ENCODE measurements at regions of chr9 and their contacts with region 1.

Region 1: DNA sequence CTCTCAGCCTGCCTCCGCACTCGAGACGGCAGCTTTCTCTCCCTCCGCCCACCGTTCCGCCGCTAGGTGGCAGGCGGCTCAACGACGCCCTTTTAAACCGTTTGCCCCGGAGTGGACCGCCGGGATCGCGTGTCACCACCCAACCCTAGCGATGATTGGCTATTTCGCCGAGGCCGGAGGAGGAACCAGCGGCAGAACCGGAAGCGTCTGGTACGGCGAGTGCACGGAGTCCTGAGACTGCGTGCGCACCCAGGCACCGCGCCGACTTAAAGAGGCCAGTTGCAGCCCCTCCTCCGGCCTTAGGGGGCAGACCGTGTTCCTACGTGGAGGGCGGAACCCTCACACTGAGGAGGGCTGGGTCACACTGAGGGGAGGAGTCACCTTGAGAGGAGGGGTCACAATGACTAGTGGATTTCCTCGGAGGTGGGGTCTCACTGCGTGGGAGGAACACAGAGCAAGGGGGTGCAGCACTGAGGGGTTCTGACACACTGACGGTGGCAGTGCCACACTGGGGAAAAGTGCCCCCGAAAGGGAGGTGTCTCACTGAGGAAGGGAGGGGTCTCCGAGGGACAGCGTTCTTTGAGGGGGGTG is 980 bp upstream of the TESK1 start:
- DNase-seq: peak; percentile 95
- ATAC-seq: peak; percentile 90
- H3K4me3 Mint-ChIP-seq: peak overlapping the region; percentile 97
- H3K27ac Mint-ChIP-seq: peak overlapping the region; percentile 97
- H3K4me1 Mint-ChIP-seq: peaks cover 37% of the 10 kb centered on the region
- H3K27me3 Mint-ChIP-seq: no peaks in the 10 kb centered on the region
- CTCF ChIP-seq: peak; percentile 76

Region 2: DNA sequence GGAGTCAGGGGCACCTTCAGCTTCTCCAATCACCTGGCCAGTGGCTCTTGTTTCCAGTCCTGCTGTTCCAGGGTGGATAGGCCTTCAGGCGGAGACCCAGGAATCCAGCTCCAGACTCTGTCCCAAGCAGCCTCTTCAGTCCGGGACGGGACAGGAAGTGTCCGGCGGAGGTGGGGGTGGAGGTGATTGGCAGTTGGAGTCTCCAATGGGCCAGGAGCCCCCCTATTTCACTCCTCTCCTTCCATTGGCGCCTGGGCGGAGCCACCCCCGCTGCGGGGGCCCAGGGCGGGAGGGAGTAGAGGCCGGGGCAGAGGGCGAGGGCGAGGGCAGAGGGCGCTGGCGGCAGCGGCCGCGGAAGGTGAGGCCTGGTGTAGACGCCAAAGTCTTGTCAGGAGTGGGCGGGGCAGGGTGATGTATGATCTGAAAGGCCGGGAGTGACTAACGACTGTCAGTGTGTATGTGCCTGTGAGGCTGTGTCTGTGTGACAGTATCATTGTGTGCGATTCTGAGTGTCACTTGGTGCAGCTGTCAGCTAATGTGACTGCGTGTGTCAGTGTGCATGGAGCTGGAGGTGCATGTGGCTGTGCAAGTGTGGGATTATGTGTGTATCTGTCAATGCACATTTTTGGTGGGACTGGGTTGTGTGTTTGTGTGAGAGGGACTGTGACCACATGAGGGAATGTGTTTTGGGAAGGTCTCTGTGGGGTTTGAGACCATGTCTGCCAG is 952.0 kb before region 1 on chr9 and contains the start of gene IL11RA:
- CTCF ChIA-PET with region 1: no interaction called
- POLR2A ChIA-PET with region 1: no interaction called
- intact Hi-C with region 1: no loop called
- DNase-seq: no peak
- ATAC-seq: peak; percentile 42
- H3K4me3 Mint-ChIP-seq: no peak within 1 kb of the TSS
- H3K27ac Mint-ChIP-seq: no peak within 1 kb of the TSS
- H3K4me1 Mint-ChIP-seq: peaks cover 24% of the 10 kb centered on the region
- H3K27me3 Mint-ChIP-seq: no peaks in the 10 kb centered on the region
- CTCF ChIP-seq: no peak
- total RNA-seq, gene IL11RA: 11.2 and 18.8 TPM in 2 replicates

Region 3: GRCh38 chr9:35489313-35490154 is 114.5 kb before region 1 on chr9 and contains the start of gene RUSC2:
- CTCF ChIA-PET with region 1: no interaction called
- POLR2A ChIA-PET with region 1: no interaction called
- intact Hi-C with region 1: loop called (anchors 5 kb)
- DNase-seq: peak; percentile 43
- ATAC-seq: peak; percentile 86
- H3K4me3 Mint-ChIP-seq: peak within 1 kb of the TSS; percentile 82
- H3K27ac Mint-ChIP-seq: no peak within 1 kb of the TSS
- H3K4me1 Mint-ChIP-seq: peaks cover 14% of the 10 kb centered on the region
- H3K27me3 Mint-ChIP-seq: peaks cover 30% of the 10 kb centered on the region
- CTCF ChIP-seq: no peak
- total RNA-seq, gene RUSC2: 0.24 and 0.29 TPM in 2 replicates

Region 4: GRCh38 chr9:35510745-35511428 is 93.2 kb before region 1 on chr9:
- CTCF ChIA-PET with region 1: no interaction called
- POLR2A ChIA-PET with region 1: no interaction called
- intact Hi-C with region 1: no loop called
- DNase-seq: no peak
- ATAC-seq: no peak
- H3K4me3 Mint-ChIP-seq: no peak overlapping the region
- H3K27ac Mint-ChIP-seq: no peak overlapping the region
- H3K4me1 Mint-ChIP-seq: no peaks in the 10 kb centered on the region
- H3K27me3 Mint-ChIP-seq: peaks cover 22% of the 10 kb centered on the region
- CTCF ChIP-seq: no peak

Region 5: DNA sequence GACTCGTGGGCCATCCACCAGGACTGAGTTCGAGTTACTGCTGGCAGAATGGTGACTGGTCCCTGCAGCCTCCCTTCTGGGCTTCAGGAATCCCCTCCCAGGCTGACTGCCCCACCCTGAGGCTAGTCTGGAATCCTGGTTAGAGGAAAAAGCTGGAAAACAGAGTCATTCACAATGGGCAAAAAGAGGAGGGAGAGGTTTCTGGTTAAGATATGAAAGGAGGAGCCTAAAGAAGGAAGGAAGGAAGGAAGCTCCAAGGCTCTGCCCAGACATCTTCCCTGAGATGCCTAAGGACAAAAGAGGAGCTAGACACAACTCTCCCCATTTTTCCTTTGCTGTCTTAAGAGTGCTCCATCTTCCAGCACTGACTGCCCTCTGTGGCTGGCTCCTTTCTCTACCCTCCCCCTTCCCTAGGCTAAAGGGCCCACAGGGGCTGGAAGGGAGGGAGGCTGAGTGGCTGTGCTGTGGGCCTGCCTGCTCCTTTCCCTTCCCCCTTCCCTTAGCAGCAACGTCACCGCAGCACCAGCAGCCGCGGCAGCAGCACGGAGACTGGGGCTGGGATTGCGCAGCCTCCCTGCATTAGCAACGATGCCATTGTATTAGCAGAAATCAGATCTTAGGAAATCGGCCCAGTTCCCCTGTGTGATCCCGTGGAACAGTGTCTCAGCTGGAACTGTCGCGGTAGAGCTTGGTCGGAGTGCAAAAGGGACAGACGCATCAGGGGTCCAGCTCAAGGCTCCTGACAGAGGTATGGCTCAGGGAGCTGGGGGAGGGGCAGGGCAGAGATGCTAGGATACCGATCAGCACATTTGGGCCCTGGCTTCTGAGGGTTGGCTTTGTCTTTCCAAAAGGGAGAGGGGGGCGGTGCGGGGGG is 65.5 kb before region 1 on chr9:
- CTCF ChIA-PET with region 1: no interaction called
- POLR2A ChIA-PET with region 1: no interaction called
- intact Hi-C with region 1: no loop called
- DNase-seq: no peak
- ATAC-seq: no peak
- H3K4me3 Mint-ChIP-seq: no peak overlapping the region
- H3K27ac Mint-ChIP-seq: no peak overlapping the region
- H3K4me1 Mint-ChIP-seq: no peaks in the 10 kb centered on the region
- H3K27me3 Mint-ChIP-seq: peaks cover 16% of the 10 kb centered on the region
- CTCF ChIP-seq: no peak

Region 6: GRCh38 chr9:35636135-35636876 is 32.2 kb after region 1 on chr9:
- CTCF ChIA-PET with region 1: no interaction called
- POLR2A ChIA-PET with region 1: no interaction called
- intact Hi-C with region 1: loop called (anchors 1 kb)
- DNase-seq: no peak
- ATAC-seq: peak; percentile 64
- H3K4me3 Mint-ChIP-seq: peak overlapping the region; percentile 71
- H3K27ac Mint-ChIP-seq: peak overlapping the region; percentile 94
- H3K4me1 Mint-ChIP-seq: peaks cover 80% of the 10 kb centered on the region
- H3K27me3 Mint-ChIP-seq: no peaks in the 10 kb centered on the region
- CTCF ChIP-seq: no peak

Region 7: GRCh38 chr9:35657546-35658136 is 53.6 kb after region 1 on chr9 and contains the start of gene RMRP:
- CTCF ChIA-PET with region 1: interaction called, 19 read pairs
- POLR2A ChIA-PET with region 1: interaction called, 549 read pairs
- intact Hi-C with region 1: loop called (anchors 1 kb)
- DNase-seq: peak; percentile 81
- ATAC-seq: peak; percentile 81
- H3K4me3 Mint-ChIP-seq: peak within 1 kb of the TSS; percentile 88
- H3K27ac Mint-ChIP-seq: peak within 1 kb of the TSS; percentile 99
- H3K4me1 Mint-ChIP-seq: peaks cover 78% of the 10 kb centered on the region
- H3K27me3 Mint-ChIP-seq: peaks cover 5% of the 10 kb centered on the region
- CTCF ChIP-seq: no peak
- total RNA-seq, gene RMRP: 8,247 and 9,516 TPM in 2 replicates

Region 8: GRCh38 chr9:35716230-35716629 is 112.1 kb after region 1 on chr9:
- CTCF ChIA-PET with region 1: interaction called, 3 read pairs
- POLR2A ChIA-PET with region 1: interaction called, 4 read pairs
- intact Hi-C with region 1: loop called (anchors 1 kb)
- DNase-seq: no peak
- ATAC-seq: no peak
- H3K4me3 Mint-ChIP-seq: no peak overlapping the region
- H3K27ac Mint-ChIP-seq: no peak overlapping the region
- H3K4me1 Mint-ChIP-seq: peaks cover 26% of the 10 kb centered on the region
- H3K27me3 Mint-ChIP-seq: no peaks in the 10 kb centered on the region
- CTCF ChIP-seq: no peak

Region 9: DNA sequence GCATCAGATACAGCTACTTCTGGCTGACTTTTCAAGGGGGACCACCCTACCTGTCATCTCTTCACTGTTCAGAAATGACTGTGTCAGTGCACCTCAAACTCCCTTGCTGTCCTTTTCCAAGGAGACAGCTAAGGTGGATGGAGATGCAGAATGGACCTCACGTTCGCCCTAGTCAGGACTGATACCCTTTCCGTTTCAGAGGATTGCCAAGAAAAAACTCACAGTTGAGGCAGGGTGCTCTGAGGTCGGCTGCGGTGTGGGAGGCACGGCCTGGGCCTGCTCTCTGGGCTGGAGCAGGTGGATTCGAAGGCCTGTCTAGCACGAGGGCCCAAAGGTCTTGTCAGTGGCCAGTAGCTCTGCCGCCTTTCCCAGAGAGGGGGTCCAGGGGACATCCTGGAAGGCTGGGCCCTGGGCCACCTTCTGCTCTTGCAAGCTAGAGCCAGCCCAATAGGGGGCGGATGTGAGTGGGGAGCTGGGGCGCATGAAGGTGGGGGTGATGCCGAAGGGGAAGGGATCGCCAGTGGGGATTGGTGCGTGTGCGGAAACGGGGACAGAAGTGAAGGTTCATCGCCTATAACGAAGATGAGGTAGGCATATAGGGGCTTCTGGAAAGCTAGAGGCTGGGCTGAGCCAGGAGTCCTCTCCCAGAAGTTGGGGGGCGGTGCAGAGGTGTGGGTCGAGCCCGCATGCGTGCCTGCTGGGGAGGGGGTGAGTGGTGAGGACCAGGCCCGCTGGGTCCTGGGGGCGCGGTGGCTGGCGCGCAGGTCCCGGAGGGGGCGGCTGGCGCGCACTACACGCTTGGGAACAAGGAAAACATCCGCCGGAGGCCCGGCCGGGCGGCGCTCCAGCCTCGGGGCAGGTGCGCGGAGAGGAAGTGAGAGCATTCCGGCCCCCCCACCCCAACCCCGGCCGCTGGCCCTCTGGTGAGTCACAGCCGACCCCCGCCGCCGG is 152.5 kb after region 1 on chr9:
- CTCF ChIA-PET with region 1: no interaction called
- POLR2A ChIA-PET with region 1: interaction called, 9 read pairs
- intact Hi-C with region 1: loop called (anchors 1 kb)
- DNase-seq: peak; percentile 68
- ATAC-seq: peak; percentile 73
- H3K4me3 Mint-ChIP-seq: peak overlapping the region; percentile 91
- H3K27ac Mint-ChIP-seq: peak overlapping the region; percentile 93
- H3K4me1 Mint-ChIP-seq: peaks cover 55% of the 10 kb centered on the region
- H3K27me3 Mint-ChIP-seq: no peaks in the 10 kb centered on the region
- CTCF ChIP-seq: no peak

Region 10: DNA sequence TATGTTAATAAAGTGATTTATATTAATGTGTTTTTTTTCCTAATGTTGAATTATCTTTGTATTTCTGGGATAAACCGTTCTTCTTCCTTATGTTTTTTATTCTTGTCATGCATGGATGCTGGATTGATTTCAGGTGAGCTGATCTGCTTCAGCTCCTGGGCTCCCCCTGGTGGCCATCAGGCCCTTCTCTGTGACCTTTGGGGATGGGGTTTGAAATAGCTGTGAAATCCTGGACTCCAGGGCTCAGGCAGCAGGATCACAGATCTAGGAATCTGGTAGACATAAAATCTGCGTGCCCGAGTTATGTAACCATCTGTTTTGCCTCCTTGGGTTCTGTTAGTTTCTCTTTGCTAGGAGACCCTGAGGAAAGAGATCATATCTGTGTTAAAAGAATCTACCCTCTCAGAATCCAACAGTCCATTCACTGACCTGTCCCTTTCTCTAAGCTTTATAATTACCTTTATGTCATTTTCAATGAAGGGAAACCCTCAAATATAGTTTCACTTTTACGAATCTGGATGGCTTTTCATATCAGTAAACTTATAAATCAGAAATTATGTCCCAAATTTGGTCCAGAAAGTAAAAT is 278.3 kb after region 1 on chr9:
- CTCF ChIA-PET with region 1: interaction called, 3 read pairs
- POLR2A ChIA-PET with region 1: no interaction called
- intact Hi-C with region 1: loop called (anchors 1 kb)
- DNase-seq: peak; percentile 74
- ATAC-seq: peak; percentile 58
- H3K4me3 Mint-ChIP-seq: no peak overlapping the region
- H3K27ac Mint-ChIP-seq: no peak overlapping the region
- H3K4me1 Mint-ChIP-seq: no peaks in the 10 kb centered on the region
- H3K27me3 Mint-ChIP-seq: peaks cover 10% of the 10 kb centered on the region
- CTCF ChIP-seq: no peak